ENCODE measurements at regions of chr19 and their contacts with region 1.

Region 1: DNA sequence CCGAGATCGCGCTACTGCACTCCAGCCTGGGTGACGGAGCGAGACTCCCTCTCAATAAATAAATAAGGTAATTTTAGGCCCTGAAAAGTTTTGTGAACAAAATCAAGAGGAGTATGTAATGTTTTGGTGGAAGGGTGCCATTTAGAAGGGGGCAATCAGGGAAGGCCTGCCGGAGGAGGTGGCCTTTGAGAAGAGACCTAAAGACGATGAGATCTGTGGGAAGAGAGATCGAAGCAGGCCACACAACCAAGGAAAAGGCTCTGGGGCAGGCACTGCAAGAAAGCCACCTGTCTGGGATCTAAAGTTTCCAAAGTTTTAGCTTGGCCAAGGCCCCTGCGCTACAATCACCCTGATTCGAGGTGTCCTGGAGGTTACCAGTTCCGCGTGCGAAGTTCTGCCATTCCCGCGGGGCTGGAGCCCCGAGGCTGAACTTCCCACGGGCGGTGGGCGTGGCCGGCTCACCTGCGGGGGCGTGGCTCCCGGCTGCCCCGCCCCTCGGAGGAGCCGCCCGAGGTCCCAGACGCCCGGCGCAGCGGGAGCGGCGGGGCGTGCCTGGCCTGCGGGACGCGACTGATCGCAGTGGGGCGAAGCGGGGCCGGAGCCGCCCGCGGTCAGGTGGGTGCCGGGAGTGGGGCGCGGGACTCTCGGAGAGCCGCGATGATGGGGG is at the start of gene KLC3:
- DNase-seq: peak in 6 of 9 experiments; percentile 14 to 58 (median 41)
- ATAC-seq: peak; percentile 54
- H3K4me3 ChIP-seq: peak within 1 kb of the TSS in 1 of 2 experiments; percentile 23
- H3K4me3 Mint-ChIP-seq: peak within 1 kb of the TSS; percentile 71
- H3K27ac ChIP-seq: no peak within 1 kb of the TSS
- H3K27ac Mint-ChIP-seq: no peak within 1 kb of the TSS
- H3K4me1 ChIP-seq: no peaks in the 10 kb centered on the region
- H3K4me1 Mint-ChIP-seq: peaks cover 6% of the 10 kb centered on the region
- H3K27me3 ChIP-seq: peaks cover 11 to 25% of the 10 kb centered on the region in 2 experiments
- H3K27me3 Mint-ChIP-seq: peaks cover 34% of the 10 kb centered on the region
- CTCF ChIP-seq: no peak
- total RNA-seq, gene KLC3: not detected

Region 2: GRCh38 chr19:44800461-44800860 is 539.9 kb before region 1 on chr19:
- CTCF ChIA-PET with region 1: no interaction called
- POLR2A ChIA-PET with region 1: no interaction called
- intact Hi-C with region 1: loop called in 1 of 2 experiments (anchors 1 kb)
- DNase-seq: peak; percentile 71 to 88 (median 79)
- ATAC-seq: peak; percentile 92
- H3K4me3 ChIP-seq: no peak overlapping the region
- H3K4me3 Mint-ChIP-seq: no peak overlapping the region
- H3K27ac ChIP-seq: no peak overlapping the region
- H3K27ac Mint-ChIP-seq: no peak overlapping the region
- H3K4me1 ChIP-seq: peaks cover 21% of the 10 kb centered on the region
- H3K4me1 Mint-ChIP-seq: peaks cover 12% of the 10 kb centered on the region
- H3K27me3 ChIP-seq: no peaks in the 10 kb centered on the region
- H3K27me3 Mint-ChIP-seq: peaks cover 3% of the 10 kb centered on the region
- CTCF ChIP-seq: peak; percentile 70

Region 3: GRCh38 chr19:44903602-44904425 is 436.6 kb before region 1 on chr19:
- CTCF ChIA-PET with region 1: no interaction called
- POLR2A ChIA-PET with region 1: no interaction called
- intact Hi-C with region 1: loop called (anchors 1 to 5 kb)
- DNase-seq: peak; percentile 55 to 85 (median 71)
- ATAC-seq: peak; percentile 73
- H3K4me3 ChIP-seq: no peak overlapping the region
- H3K4me3 Mint-ChIP-seq: no peak overlapping the region
- H3K27ac ChIP-seq: no peak overlapping the region
- H3K27ac Mint-ChIP-seq: no peak overlapping the region
- H3K4me1 ChIP-seq: peaks cover 12% of the 10 kb centered on the region
- H3K4me1 Mint-ChIP-seq: peaks cover 12% of the 10 kb centered on the region
- H3K27me3 ChIP-seq: peaks cover 7 to 25% of the 10 kb centered on the region in 2 experiments
- H3K27me3 Mint-ChIP-seq: peaks cover 23% of the 10 kb centered on the region
- CTCF ChIP-seq: peak; percentile 94